Psoas muscle (tissue), 8 donors: ENCODE measurements at regions of chr15 and their contacts with region 1.

Region 1: GRCh38 chr15:70670680-70671079 is 92.7 kb downstream of the UACA start:
- DNase-seq: no peak
- ATAC-seq: no peak
- H3K4me3 ChIP-seq: no peak overlapping the region
- H3K27ac ChIP-seq: no peak overlapping the region
- H3K4me1 ChIP-seq: no peaks in the 10 kb centered on the region
- H3K27me3 ChIP-seq: no peaks in the 10 kb centered on the region
- CTCF ChIP-seq: no peak

Region 2: GRCh38 chr15:70722266-70723121 is 51.8 kb after region 1 on chr15:
- intact Hi-C with region 1: loop called in 1 of 2 experiments (anchors 10 kb)
- DNase-seq: no peak
- ATAC-seq: peak; percentile 32 to 63 (median 52)
- H3K4me3 ChIP-seq: peak overlapping the region; percentile 38
- H3K27ac ChIP-seq: peak overlapping the region; percentile 82
- H3K4me1 ChIP-seq: peaks cover 57% of the 10 kb centered on the region
- H3K27me3 ChIP-seq: no peaks in the 10 kb centered on the region
- CTCF ChIP-seq: peak; percentile 79